B cell (primary cell): ENCODE measurements at regions of chr16 and their contacts with region 1.

Region 1: DNA sequence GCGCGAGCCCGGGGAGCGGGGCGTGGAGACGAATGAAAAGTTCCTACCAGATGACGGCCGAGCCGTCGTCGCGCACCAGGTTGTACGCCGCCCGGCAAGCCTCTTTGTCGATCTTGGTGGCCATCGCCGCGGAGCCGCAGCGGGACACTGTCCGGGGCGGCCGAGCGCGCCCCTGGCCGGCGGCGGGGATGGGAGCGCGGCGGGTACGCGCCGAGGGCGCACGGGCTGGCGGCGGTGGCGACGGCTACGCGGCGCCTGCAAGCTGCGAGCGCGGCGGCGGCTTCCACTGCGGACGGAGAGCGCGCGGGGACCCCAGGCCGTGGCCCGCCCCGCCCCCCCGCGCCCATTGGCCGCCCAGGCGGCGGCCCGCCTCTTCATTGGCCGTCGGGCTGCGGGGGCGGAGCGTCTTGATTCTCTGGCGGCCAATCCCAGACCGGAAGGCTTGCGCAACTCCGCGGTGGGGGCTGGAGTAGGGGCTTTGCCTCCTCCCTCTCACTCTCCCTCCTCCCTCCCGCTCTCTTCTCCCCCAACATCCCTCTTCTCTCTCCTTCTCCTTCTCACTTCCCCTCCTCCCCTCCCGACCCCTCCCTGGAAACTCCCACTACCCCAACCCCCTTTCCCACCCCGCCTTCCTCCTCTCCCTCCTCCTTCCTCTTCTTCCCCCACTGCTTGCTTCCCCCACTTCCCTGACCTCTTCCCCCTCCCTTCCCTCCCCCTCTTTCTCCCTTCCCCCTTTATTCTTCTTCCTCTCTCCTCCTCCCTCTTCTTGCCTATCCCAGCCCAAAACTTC is at the start of gene COTL1:
- DNase-seq: peak; percentile 96
- ATAC-seq: peak; percentile 88
- H3K4me3 ChIP-seq: peak within 1 kb of the TSS; percentile 73 to 96 (median 85)
- H3K4me3 Mint-ChIP-seq: peak within 1 kb of the TSS; percentile 88
- H3K27ac ChIP-seq: peak within 1 kb of the TSS; percentile 4 to 72
- H3K27ac Mint-ChIP-seq: peak within 1 kb of the TSS; percentile 90
- H3K4me1 ChIP-seq: peaks cover 51 to 67% of the 10 kb centered on the region in 2 donors
- H3K4me1 Mint-ChIP-seq: peaks cover 72% of the 10 kb centered on the region
- H3K27me3 ChIP-seq: no peaks in the 10 kb centered on the region
- H3K27me3 Mint-ChIP-seq: no peaks in the 10 kb centered on the region
- CTCF ChIP-seq: no peak
- total RNA-seq, gene COTL1: 245 and 264 TPM in 2 replicates

Region 2: GRCh38 chr16:84029297-84030047 is 588.5 kb before region 1 on chr16:
- CTCF ChIA-PET with region 1: no interaction called
- POLR2A ChIA-PET with region 1: no interaction called
- intact Hi-C with region 1: no loop called
- DNase-seq: no peak
- ATAC-seq: no peak
- H3K4me3 ChIP-seq: no peak overlapping the region
- H3K4me3 Mint-ChIP-seq: no peak overlapping the region
- H3K27ac ChIP-seq: no peak overlapping the region
- H3K27ac Mint-ChIP-seq: no peak overlapping the region
- H3K4me1 ChIP-seq: peaks cover 0 to 4% of the 10 kb centered on the region in 2 donors
- H3K4me1 Mint-ChIP-seq: peaks cover 7% of the 10 kb centered on the region
- H3K27me3 ChIP-seq: peaks cover 0 to 9% (median 3%) of the 10 kb centered on the region in 4 experiments
- H3K27me3 Mint-ChIP-seq: peaks cover 39% of the 10 kb centered on the region
- CTCF ChIP-seq: no peak

Region 3: GRCh38 chr16:84266451-84266850 is 351.5 kb before region 1 on chr16:
- CTCF ChIA-PET with region 1: no interaction called
- POLR2A ChIA-PET with region 1: no interaction called
- intact Hi-C with region 1: no loop called
- DNase-seq: peak; percentile 28
- ATAC-seq: peak; percentile 28
- H3K4me3 ChIP-seq: no peak overlapping the region
- H3K4me3 Mint-ChIP-seq: no peak overlapping the region
- H3K27ac ChIP-seq: no peak overlapping the region
- H3K27ac Mint-ChIP-seq: no peak overlapping the region
- H3K4me1 ChIP-seq: no peaks in the 10 kb centered on the region
- H3K4me1 Mint-ChIP-seq: no peaks in the 10 kb centered on the region
- H3K27me3 ChIP-seq: no peaks in the 10 kb centered on the region
- H3K27me3 Mint-ChIP-seq: peaks cover 20% of the 10 kb centered on the region
- CTCF ChIP-seq: no peak

Region 4: GRCh38 chr16:84504420-84505248 is 113.4 kb before region 1 on chr16 and contains the start of gene MEAK7:
- CTCF ChIA-PET with region 1: interaction called, 518 read pairs
- POLR2A ChIA-PET with region 1: interaction called, 9 read pairs
- intact Hi-C with region 1: loop called (anchors 1 kb)
- DNase-seq: peak; percentile 98
- ATAC-seq: peak; percentile 97
- H3K4me3 ChIP-seq: peak within 1 kb of the TSS; percentile 63 to 88 (median 77)
- H3K4me3 Mint-ChIP-seq: peak within 1 kb of the TSS; percentile 95
- H3K27ac ChIP-seq: peak within 1 kb of the TSS; percentile 47 to 65
- H3K27ac Mint-ChIP-seq: peak within 1 kb of the TSS; percentile 90
- H3K4me1 ChIP-seq: peaks cover 33 to 44% of the 10 kb centered on the region in 2 donors
- H3K4me1 Mint-ChIP-seq: peaks cover 49% of the 10 kb centered on the region
- H3K27me3 ChIP-seq: no peaks in the 10 kb centered on the region
- H3K27me3 Mint-ChIP-seq: no peaks in the 10 kb centered on the region
- CTCF ChIP-seq: no peak
- total RNA-seq, gene MEAK7: 19.3 and 23.0 TPM in 2 replicates

Region 5: GRCh38 chr16:84562174-84562815 is 55.7 kb before region 1 on chr16:
- CTCF ChIA-PET with region 1: interaction called, 19 read pairs
- POLR2A ChIA-PET with region 1: interaction called, 4 read pairs
- intact Hi-C with region 1: loop called (anchors 2 kb)
- DNase-seq: peak; percentile 80
- ATAC-seq: peak; percentile 89
- H3K4me3 ChIP-seq: no peak overlapping the region
- H3K4me3 Mint-ChIP-seq: peak overlapping the region; percentile 58
- H3K27ac ChIP-seq: peak overlapping the region; percentile 61 to 69
- H3K27ac Mint-ChIP-seq: peak overlapping the region; percentile 90
- H3K4me1 ChIP-seq: peaks cover 23 to 32% of the 10 kb centered on the region in 2 donors
- H3K4me1 Mint-ChIP-seq: peaks cover 27% of the 10 kb centered on the region
- H3K27me3 ChIP-seq: peaks cover 0 to under 1% (median 0%) of the 10 kb centered on the region in 4 experiments
- H3K27me3 Mint-ChIP-seq: no peaks in the 10 kb centered on the region
- CTCF ChIP-seq: no peak

Region 6: DNA sequence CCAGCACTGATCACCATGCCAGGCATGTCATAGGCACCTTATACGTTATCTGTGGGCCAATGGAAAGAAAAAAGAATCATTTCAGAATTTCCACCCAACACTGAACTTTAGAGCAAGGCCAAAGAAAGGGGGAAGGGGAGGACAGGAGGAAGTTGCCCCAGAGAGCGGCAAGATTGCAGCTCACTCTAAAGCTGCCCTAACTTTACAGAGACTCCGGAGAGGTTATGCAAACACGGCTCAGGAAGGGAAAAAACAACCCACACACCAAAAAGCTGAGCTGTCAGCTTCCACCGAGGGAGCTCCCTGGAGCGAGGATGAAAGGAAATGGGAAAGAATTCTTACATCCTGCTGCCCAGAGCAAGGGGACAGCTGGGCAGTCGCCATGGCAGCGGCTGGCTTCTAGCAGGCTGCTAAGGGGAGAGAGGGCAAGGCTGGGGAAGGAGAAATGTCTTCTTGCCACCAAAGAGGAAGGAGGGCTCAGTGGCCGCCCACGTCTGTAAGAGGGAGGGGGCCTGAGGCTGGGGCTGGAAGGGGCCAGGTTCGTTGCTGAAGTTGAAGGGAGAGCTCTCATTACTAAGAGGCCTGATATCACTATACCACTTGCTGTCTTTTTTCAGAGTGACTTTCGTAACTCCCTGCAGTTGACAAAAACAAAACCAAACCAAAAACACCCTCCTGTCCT is 18.3 kb before region 1 on chr16:
- CTCF ChIA-PET with region 1: interaction called, 42 read pairs
- POLR2A ChIA-PET with region 1: interaction called, 14 read pairs
- intact Hi-C with region 1: loop called (anchors 1 kb)
- DNase-seq: peak; percentile 77
- ATAC-seq: peak; percentile 49
- H3K4me3 ChIP-seq: peak overlapping the region; percentile 29 to 57 (median 47)
- H3K4me3 Mint-ChIP-seq: peak overlapping the region; percentile 86
- H3K27ac ChIP-seq: peak overlapping the region; percentile 86 to 91
- H3K27ac Mint-ChIP-seq: peak overlapping the region; percentile 96
- H3K4me1 ChIP-seq: peaks cover 91 to 95% of the 10 kb centered on the region in 2 donors
- H3K4me1 Mint-ChIP-seq: peaks cover 89% of the 10 kb centered on the region
- H3K27me3 ChIP-seq: no peaks in the 10 kb centered on the region
- H3K27me3 Mint-ChIP-seq: no peaks in the 10 kb centered on the region
- CTCF ChIP-seq: no peak

Region 7: GRCh38 chr16:84647828-84648594 is 30.0 kb after region 1 on chr16 and contains the start of gene KLHL36:
- CTCF ChIA-PET with region 1: interaction called, 19 read pairs
- POLR2A ChIA-PET with region 1: interaction called, 3 read pairs
- intact Hi-C with region 1: loop called (anchors 2 kb)
- DNase-seq: peak; percentile 83
- ATAC-seq: peak; percentile 90
- H3K4me3 ChIP-seq: peak within 1 kb of the TSS; percentile 42 to 75 (median 70)
- H3K4me3 Mint-ChIP-seq: peak within 1 kb of the TSS; percentile 92
- H3K27ac ChIP-seq: peak within 1 kb of the TSS; percentile 56 to 83
- H3K27ac Mint-ChIP-seq: peak within 1 kb of the TSS; percentile 92
- H3K4me1 ChIP-seq: peaks cover 34 to 44% of the 10 kb centered on the region in 2 donors
- H3K4me1 Mint-ChIP-seq: peaks cover 51% of the 10 kb centered on the region
- H3K27me3 ChIP-seq: no peaks in the 10 kb centered on the region
- H3K27me3 Mint-ChIP-seq: no peaks in the 10 kb centered on the region
- CTCF ChIP-seq: no peak
- total RNA-seq, gene KLHL36: 133 and 135 TPM in 2 replicates

Region 8: GRCh38 chr16:84726079-84726668 is 108.2 kb after region 1 on chr16:
- CTCF ChIA-PET with region 1: interaction called, 536 read pairs
- POLR2A ChIA-PET with region 1: interaction called, 4 read pairs
- intact Hi-C with region 1: loop called (anchors 1 kb)
- DNase-seq: peak; percentile 85
- ATAC-seq: peak; percentile 55
- H3K4me3 ChIP-seq: peak overlapping the region; percentile 28 to 59 (median 52)
- H3K4me3 Mint-ChIP-seq: peak overlapping the region; percentile 87
- H3K27ac ChIP-seq: peak overlapping the region; percentile 55 to 78
- H3K27ac Mint-ChIP-seq: peak overlapping the region; percentile 90
- H3K4me1 ChIP-seq: peaks cover 44 to 58% of the 10 kb centered on the region in 2 donors
- H3K4me1 Mint-ChIP-seq: peaks cover 74% of the 10 kb centered on the region
- H3K27me3 ChIP-seq: no peaks in the 10 kb centered on the region
- H3K27me3 Mint-ChIP-seq: no peaks in the 10 kb centered on the region
- CTCF ChIP-seq: peak; percentile 99

Region 9: DNA sequence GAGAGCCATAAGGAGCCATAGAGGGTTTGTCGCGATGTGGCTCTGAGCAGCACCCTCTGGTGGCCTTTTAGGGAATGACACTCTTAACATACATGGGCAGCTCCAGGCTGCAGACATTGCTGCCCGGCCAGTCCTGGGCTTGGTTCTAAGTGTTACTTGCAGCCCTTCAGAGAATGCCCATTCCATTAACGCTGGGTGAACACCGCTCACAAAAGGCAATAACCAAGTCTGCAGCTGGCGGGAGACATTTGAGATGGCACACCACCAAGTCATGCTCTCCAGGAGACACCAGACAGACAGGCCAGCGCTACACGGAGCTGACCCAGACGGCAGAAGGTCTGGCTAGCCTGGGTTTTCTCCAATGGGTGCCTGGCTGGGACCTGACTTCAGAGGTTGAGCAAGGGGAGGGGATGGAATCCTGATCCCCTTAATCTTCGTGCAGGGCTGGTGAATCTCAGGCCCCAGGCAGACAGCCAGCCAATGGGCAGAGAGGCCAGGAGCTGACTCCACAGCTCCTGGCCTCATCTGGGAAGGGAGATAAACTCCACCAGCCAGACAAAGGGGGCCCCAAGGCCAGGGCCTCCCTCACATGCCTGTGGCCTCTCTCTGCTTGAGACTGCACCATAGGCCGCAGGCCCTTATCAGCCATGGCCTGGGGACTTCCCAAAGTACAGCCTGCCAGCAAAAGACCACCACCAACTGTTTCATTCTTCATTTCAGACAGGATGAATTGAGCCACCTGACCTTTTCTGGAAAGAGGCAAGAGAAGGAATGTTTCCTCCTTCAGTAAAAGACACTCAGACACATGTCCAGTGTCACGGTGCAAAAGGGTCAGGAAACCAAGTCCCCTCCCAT is 334.6 kb after region 1 on chr16:
- CTCF ChIA-PET with region 1: interaction called, 28 read pairs
- POLR2A ChIA-PET with region 1: no interaction called
- intact Hi-C with region 1: loop called (anchors 2 kb)
- DNase-seq: peak; percentile 83
- ATAC-seq: peak; percentile 87
- H3K4me3 ChIP-seq: no peak overlapping the region
- H3K4me3 Mint-ChIP-seq: no peak overlapping the region
- H3K27ac ChIP-seq: no peak overlapping the region
- H3K27ac Mint-ChIP-seq: no peak overlapping the region
- H3K4me1 ChIP-seq: peaks cover 0 to 14% of the 10 kb centered on the region in 2 donors
- H3K4me1 Mint-ChIP-seq: peaks cover 6% of the 10 kb centered on the region
- H3K27me3 ChIP-seq: peaks cover 0 to 14% (median 4%) of the 10 kb centered on the region in 4 experiments
- H3K27me3 Mint-ChIP-seq: peaks cover 12% of the 10 kb centered on the region
- CTCF ChIP-seq: peak; percentile 85